Activated CD4-positive, alpha-beta memory T cell treated with anti-CD3 and anti-CD28 coated beads for 36 hours (primary cell): ENCODE measurements at regions of chr20 and their contacts with region 1.

Region 1: GRCh38 chr20:44028868-44029847 is 114.5 kb downstream of the TOX2 start:
- DNase-seq: peak; percentile 71
- H3K4me3 Mint-ChIP-seq: peak overlapping the region; percentile 46
- H3K27ac Mint-ChIP-seq: peak overlapping the region; percentile 3
- H3K4me1 Mint-ChIP-seq: peaks cover 39% of the 10 kb centered on the region
- H3K27me3 Mint-ChIP-seq: peaks cover 20% of the 10 kb centered on the region

Region 2: DNA sequence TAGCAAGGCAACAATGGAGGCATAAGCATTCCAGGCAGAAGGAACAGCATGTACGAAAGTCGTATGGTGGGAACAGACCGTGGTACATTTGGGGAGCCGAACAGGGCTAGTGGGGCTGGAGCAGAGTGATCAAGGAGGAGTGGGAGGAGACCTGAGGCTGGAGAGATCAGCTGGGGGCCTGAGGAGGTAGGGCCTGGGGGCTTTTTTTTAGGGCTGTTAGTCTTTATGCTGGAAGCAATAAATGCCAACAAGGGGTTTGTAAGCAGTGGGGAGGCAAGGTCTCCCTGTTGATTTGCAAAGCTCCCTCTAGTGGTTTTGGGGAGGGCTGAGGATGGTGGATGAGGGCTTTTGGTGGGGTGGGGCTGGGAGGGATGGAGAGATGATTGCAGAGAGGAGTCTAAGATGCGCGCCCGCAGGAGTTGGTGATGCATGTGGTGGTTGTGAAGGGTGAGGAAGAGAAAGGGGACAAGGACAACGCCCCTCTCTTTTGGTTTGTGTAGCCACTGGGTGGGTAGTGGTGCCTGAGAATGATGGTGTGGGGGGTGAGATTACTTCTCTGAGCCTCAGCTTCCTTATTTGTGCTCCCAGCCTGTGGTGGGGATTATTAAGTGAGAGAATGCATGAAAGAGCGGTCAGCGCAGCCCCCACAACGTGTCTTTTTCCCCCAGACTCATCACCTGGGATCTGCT is 188.6 kb before region 1 on chr20:
- CTCF ChIA-PET with region 1: no interaction called
- POLR2A ChIA-PET with region 1: no interaction called
- intact Hi-C with region 1: loop called (anchors 5 kb)
- DNase-seq: peak; percentile 64
- H3K4me3 Mint-ChIP-seq: no peak overlapping the region
- H3K27ac Mint-ChIP-seq: no peak overlapping the region
- H3K4me1 Mint-ChIP-seq: peaks cover 31% of the 10 kb centered on the region
- H3K27me3 Mint-ChIP-seq: peaks cover 20% of the 10 kb centered on the region

Region 3: GRCh38 chr20:44001667-44002596 is 27.2 kb before region 1 on chr20:
- CTCF ChIA-PET with region 1: no interaction called
- POLR2A ChIA-PET with region 1: no interaction called
- intact Hi-C with region 1: no loop called
- DNase-seq: peak; percentile 49
- H3K4me3 Mint-ChIP-seq: no peak overlapping the region
- H3K27ac Mint-ChIP-seq: no peak overlapping the region
- H3K4me1 Mint-ChIP-seq: peaks cover 12% of the 10 kb centered on the region
- H3K27me3 Mint-ChIP-seq: peaks cover 5% of the 10 kb centered on the region